ENCODE measurements at regions of chr2 and their contacts with region 1.

Region 1: GRCh38 chr2:44479122-44479887 is 117.6 kb downstream of the CAMKMT start:
- DNase-seq: no peak
- ATAC-seq: peak; percentile 95
- H3K4me3 Mint-ChIP-seq: no peak overlapping the region
- H3K27ac Mint-ChIP-seq: peak overlapping the region; percentile 38; the same call in 1 of the 2 replicates
- H3K4me1 Mint-ChIP-seq: peaks cover 35% of the 10 kb centered on the region
- H3K27me3 Mint-ChIP-seq: no peaks in the 10 kb centered on the region
- CTCF ChIP-seq: peak; percentile 81

Region 2: GRCh38 chr2:44361330-44362206 is 117.7 kb before region 1 on chr2 and contains the starts of genes CAMKMT and PREPL:
- CTCF ChIA-PET with region 1: interaction called, 12 read pairs
- POLR2A ChIA-PET with region 1: interaction called, 5 read pairs
- DNase-seq: peak; percentile 98
- ATAC-seq: peak; percentile 87
- H3K4me3 Mint-ChIP-seq: peak within 1 kb of the TSS; percentile 100
- H3K27ac Mint-ChIP-seq: peak within 1 kb of the TSS; percentile 99
- H3K4me1 Mint-ChIP-seq: peaks cover 18% of the 10 kb centered on the region
- H3K27me3 Mint-ChIP-seq: no peaks in the 10 kb centered on the region
- CTCF ChIP-seq: no peak
- total RNA-seq, gene CAMKMT: 20.3 to 21.3 TPM (median 20.6 TPM) in 3 replicates
- total RNA-seq, gene PREPL: 27.6 to 29.3 TPM (median 29.1 TPM) in 3 replicates

Region 3: DNA sequence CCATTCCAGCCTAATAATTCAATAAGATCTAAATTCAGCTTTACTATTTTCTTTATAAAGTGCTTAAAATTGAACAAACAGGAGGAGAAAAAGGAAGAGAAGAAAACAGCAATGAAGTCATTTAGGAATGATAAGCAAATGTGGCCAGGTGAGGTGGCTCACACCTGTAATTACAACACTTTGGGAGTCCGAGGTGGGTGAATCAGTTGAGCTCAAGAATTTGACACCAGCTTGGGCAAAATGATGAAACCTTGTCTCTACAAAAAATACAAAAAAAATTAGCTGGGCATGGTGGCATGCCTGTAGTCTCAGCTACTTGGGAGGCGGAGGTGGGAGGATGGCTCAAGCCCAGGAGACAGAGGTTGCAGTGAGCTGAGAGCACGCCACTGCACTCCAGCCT is 11.4 kb after region 1 on chr2:
- CTCF ChIA-PET with region 1: interaction called, 22 read pairs
- POLR2A ChIA-PET with region 1: no interaction called
- DNase-seq: no peak
- ATAC-seq: no peak
- H3K4me3 Mint-ChIP-seq: no peak overlapping the region
- H3K27ac Mint-ChIP-seq: no peak overlapping the region
- H3K4me1 Mint-ChIP-seq: peaks cover 10% of the 10 kb centered on the region
- H3K27me3 Mint-ChIP-seq: no peaks in the 10 kb centered on the region; the same call in 1 of the 2 replicates
- CTCF ChIP-seq: no peak

Region 4: DNA sequence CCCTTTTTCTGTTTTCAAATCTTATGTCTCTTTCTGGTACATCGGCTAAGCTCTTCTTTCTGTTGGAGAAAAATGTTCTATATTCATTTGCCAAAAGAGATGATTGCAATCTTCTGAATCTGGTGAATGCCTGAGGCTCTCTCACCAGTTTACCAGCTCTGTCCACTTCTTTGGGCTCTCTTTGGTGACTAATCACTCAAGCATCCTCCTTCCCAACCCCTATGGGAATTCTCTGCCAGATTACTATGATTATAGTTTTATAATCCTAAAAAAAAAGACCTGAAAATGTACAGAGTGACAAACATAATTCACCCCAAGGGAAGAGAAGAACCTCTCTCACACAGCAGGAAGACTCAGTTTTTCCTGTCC is 69.8 kb after region 1 on chr2:
- CTCF ChIA-PET with region 1: interaction called, 12 read pairs
- POLR2A ChIA-PET with region 1: no interaction called
- DNase-seq: no peak
- ATAC-seq: no peak
- H3K4me3 Mint-ChIP-seq: no peak overlapping the region
- H3K27ac Mint-ChIP-seq: peak overlapping the region; percentile 13; the same call in 1 of the 2 replicates
- H3K4me1 Mint-ChIP-seq: peaks cover 51% of the 10 kb centered on the region
- H3K27me3 Mint-ChIP-seq: no peaks in the 10 kb centered on the region
- CTCF ChIP-seq: no peak

Region 5: DNA sequence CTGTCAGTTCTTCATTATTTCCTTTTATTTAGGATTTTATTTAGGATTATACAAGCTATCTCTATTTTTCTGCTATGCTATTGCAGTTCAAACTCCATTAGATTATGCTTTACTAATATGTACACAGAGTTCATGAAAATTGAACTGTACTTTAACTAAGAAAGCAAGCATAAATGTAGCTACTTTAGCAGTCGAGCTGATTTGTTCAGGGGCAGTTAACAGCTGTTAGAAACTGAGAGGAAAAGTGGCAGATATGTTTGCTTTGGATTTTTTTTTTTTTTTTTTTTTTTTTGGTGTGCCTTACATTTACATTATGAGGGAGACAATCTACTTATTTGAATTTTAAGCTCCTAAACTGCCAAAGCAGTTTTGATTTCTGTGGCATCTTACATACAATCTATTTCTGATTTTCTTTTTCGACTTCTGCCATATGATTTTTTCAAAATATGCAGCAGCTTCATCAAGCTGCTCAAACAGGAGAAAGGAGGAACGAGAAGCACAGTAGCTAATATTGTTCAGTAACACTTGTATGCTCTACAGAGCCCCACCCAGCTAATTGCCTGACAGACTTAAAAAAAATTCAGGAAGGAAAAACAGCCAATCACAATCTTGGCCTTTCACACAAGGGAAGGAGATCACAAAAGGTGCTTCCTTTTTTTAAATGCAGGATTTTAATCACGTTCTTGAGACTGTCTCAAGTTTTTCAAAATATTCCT is 228.8 kb after region 1 on chr2:
- CTCF ChIA-PET with region 1: interaction called, 21 read pairs
- POLR2A ChIA-PET with region 1: no interaction called
- DNase-seq: no peak
- ATAC-seq: peak; percentile 34; the same call in 1 of the 2 replicates
- H3K4me3 Mint-ChIP-seq: 0 out of 2 replicates have a peak overlapping the region, but pooled peaks have one; percentile 1
- H3K27ac Mint-ChIP-seq: no peak overlapping the region
- H3K4me1 Mint-ChIP-seq: peaks cover 48% of the 10 kb centered on the region
- H3K27me3 Mint-ChIP-seq: no peaks in the 10 kb centered on the region
- CTCF ChIP-seq: no peak

Region 6: DNA sequence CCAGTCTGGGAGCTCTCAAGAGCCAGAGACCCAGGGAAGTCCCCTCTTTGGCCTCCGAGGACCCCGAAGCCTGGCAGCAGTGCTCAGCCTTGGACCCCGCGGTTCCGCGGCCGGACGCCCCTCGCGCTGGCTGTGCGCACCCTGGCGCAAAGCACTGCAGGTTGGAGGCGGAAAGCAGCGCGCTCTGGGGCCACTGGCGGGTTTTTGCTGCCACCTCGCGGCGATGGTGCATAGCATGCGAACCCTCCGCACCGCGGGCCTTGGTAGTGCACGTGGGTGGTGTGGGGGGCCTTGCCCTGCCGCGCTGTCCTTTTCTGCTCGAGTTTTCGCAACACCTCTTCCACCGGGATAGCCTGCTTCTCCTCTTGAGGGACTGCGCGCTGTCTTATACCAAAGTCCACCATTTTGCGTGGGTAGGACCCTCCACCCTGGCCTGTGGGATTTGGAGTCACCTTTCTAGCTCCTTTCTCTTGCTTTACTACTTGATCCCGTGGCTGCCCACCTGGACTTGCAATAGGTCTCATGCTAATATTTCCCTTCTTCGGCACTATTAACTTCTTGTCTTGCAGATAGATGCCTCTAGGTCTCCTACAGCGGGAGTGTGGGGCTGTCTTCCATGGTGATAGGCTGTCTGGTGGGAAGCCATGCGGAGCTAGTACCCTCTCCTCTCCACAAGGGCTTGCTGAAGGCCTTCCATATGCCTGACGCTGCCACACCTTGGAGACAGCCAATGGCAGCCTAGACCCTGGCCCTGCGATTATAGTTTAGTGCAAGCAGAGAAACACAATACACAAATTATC is 476.5 kb after region 1 on chr2:
- CTCF ChIA-PET with region 1: interaction called, 15 read pairs
- POLR2A ChIA-PET with region 1: no interaction called
- DNase-seq: peak; percentile 90
- ATAC-seq: peak; percentile 65
- H3K4me3 Mint-ChIP-seq: peak overlapping the region; percentile 67
- H3K27ac Mint-ChIP-seq: no peak overlapping the region
- H3K4me1 Mint-ChIP-seq: peaks cover 45% of the 10 kb centered on the region
- H3K27me3 Mint-ChIP-seq: peaks cover 70% of the 10 kb centered on the region
- CTCF ChIP-seq: peak; percentile 71